ENCODE measurements at regions of chr14 and their contacts with region 1.

Region 1: GRCh38 chr14:56590535-56590960 is 10.9 kb downstream of the TMEM260 start:
- DNase-seq: no peak
- H3K4me3 ChIP-seq: no peak overlapping the region
- H3K27ac ChIP-seq: no peak overlapping the region
- H3K4me1 ChIP-seq: peaks cover 0 to 5% (median 0%) of the 10 kb centered on the region in 4 experiments; a peak in 1 of 7 replicates
- H3K27me3 ChIP-seq: no peaks in the 10 kb centered on the region
- CTCF ChIP-seq: peak in 1 of 3 experiments; percentile 27; a peak in 2 of 4 replicates
- EP300 ChIP-seq: no peak
- POLR2A ChIP-seq: no peak
- RAD21 ChIP-seq: peak in 1 of 2 experiments; percentile 34; a peak in 2 of 4 replicates

Region 2: GRCh38 chr14:56351861-56352260 is 238.7 kb before region 1 on chr14:
- CTCF ChIA-PET with region 1: no interaction called
- POLR2A ChIA-PET with region 1: no interaction called
- DNase-seq: no peak
- H3K4me3 ChIP-seq: no peak overlapping the region
- H3K27ac ChIP-seq: no peak overlapping the region
- H3K4me1 ChIP-seq: no peaks in the 10 kb centered on the region
- H3K27me3 ChIP-seq: no peaks in the 10 kb centered on the region
- CTCF ChIP-seq: no peak
- EP300 ChIP-seq: no peak
- POLR2A ChIP-seq: no peak
- RAD21 ChIP-seq: no peak

Region 3: DNA sequence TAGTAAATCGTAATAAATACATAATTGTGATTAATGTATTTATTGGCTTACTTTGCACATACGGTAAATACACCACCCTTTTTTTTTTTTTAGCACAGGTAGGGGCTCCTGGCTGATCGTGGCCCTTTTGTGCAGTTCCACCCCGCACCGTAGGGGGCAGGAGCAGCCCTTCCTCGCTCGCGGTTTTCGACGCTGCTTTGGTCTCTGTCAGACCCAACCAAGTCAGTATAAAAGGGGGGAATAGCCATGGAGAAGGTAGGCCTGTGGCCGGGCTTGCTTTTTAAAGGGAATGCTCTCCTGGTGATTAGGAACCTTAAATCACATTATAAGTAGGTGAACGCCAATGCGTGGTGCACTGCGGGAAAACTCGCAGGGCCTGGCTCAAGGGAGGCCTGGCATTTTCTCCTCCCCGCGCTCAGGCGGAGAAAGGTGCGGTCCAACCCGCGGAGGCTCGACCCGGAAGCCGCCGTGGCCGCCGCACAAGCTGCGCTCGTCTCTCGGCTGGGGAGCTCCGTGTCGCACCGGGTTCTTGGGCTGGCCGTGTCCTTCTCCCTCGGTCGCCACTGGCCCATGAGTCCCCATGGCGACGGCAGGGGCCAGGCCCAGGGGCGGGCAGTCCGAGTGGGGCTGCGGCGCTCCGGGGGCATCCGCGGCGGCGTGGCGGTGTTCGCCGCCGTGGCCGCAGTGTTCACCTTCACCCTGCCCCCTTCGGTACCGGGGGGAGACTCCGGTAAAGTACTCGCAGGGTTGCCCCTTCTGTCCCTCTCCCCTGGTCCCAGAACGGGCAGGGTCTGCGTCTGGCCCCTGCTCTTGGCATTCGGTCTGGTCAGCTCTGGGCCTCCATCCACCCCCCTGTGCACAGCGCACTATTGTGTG is 11.0 kb before region 1 on chr14 and contains the start of gene TMEM260:
- CTCF ChIA-PET with region 1: interaction called, 18 read pairs
- POLR2A ChIA-PET with region 1: interaction called, 3 read pairs
- DNase-seq: peak; percentile 71 to 96
- H3K4me3 ChIP-seq: peak within 1 kb of the TSS; percentile 90 to 98 (median 96)
- H3K27ac ChIP-seq: peak within 1 kb of the TSS; percentile 98
- H3K4me1 ChIP-seq: peaks cover 0 to 6% (median 3%) of the 10 kb centered on the region in 4 experiments; a peak in 3 of 7 replicates
- H3K27me3 ChIP-seq: no peaks in the 10 kb centered on the region
- CTCF ChIP-seq: peak; percentile 59 to 83 (median 83)
- EP300 ChIP-seq: peak in 1 of 2 experiments; percentile 98; a peak in 2 of 3 replicates
- POLR2A ChIP-seq: peak in 1 of 2 experiments; percentile 91; a peak in 2 of 3 replicates
- RAD21 ChIP-seq: peak; percentile 58 to 61
- total RNA-seq, gene TMEM260: 15.2 and 16.8 TPM in 2 replicates

Measured in H1 (cell line).